AG04449 (cell line): ENCODE measurements at regions of chr1 and their contacts with region 1.

Region 1: DNA sequence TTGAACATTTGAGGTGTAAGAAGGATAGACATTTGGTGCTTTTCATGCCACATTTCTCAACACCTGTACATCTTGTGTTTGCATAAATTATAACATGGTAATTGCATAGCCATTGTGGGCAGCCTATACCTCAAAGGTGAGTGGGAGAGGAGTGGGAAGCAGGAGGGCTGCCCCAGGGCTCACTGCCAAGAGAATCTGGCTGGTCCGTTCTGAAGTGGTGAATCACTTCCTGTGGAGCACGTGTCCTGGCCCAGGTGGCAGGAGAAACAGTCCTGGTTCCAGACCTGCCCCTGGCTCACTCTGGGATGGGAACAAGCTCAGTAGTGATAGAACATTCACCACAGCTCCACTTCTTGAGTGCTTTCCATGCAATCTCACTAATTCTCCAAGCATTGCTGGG is 11.6 kb upstream of the OLFML2B start:
- DNase-seq: no peak
- H3K4me3 ChIP-seq: no peak overlapping the region
- CTCF ChIP-seq: no peak

Region 2: DNA sequence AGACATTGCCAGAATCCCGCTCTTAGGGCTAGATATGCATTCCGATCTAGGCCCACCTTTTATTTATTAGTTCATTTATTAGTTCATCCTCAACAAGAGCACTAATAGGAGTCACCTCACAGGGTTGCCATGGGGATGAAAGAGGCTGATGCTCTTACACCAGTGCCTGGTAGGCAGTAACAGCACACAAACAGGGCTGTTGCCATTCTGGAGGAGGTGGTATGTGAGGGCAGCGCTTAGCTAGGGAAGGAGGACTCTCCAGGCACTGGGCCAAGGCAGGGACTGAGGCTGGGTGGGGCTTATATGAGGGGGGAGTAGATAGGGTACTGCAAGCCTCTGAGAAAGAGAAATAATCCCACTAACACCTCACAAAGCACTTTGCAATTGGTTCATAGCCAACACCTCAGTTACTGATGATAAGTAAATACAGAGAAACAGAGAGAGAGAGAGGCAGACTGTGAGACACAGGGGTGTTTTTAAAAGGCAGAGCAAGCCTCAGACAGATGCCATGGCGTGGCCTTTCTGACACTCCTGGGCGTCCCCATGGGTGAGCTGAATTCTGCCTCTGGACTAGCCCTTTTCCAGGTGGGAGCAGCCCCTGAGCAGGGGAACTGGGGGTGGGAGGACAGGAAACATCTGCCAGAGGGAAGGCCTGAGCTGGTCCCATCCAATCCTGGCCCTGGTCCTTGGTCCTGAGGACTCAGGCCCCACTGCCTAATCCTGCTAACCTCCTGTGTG is 524.1 kb before region 1 on chr1:
- CTCF ChIA-PET with region 1: no interaction called
- POLR2A ChIA-PET with region 1: no interaction called
- DNase-seq: no peak
- H3K4me3 ChIP-seq: no peak overlapping the region
- CTCF ChIP-seq: no peak

Region 3: GRCh38 chr1:161738627-161739287 is 296.5 kb before region 1 on chr1:
- CTCF ChIA-PET with region 1: interaction called, 26 read pairs
- POLR2A ChIA-PET with region 1: no interaction called
- DNase-seq: peak; percentile 45
- H3K4me3 ChIP-seq: no peak overlapping the region
- CTCF ChIP-seq: peak; percentile 61

Region 4: DNA sequence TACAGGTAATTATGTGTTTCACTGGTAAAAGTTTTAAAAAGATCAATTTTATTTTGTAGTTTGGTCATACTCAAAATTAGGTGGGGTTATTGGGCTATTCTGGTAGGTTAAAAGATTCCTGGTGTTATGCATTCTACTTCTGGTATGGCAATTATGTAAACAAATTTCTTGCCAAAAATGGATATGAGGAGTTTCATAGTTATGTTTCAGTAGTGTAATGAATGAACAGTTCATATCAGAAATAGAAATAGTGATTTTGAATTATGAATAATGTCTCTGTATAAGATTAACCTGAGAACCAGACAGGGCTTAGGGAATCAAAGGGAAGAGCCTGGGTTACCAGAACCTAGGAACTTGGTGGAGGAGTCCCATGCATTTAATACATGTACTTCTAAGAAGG is 253.2 kb before region 1 on chr1:
- CTCF ChIA-PET with region 1: interaction called, 36 read pairs
- POLR2A ChIA-PET with region 1: no interaction called
- DNase-seq: peak; percentile 5
- H3K4me3 ChIP-seq: no peak overlapping the region
- CTCF ChIP-seq: no peak

Region 5: DNA sequence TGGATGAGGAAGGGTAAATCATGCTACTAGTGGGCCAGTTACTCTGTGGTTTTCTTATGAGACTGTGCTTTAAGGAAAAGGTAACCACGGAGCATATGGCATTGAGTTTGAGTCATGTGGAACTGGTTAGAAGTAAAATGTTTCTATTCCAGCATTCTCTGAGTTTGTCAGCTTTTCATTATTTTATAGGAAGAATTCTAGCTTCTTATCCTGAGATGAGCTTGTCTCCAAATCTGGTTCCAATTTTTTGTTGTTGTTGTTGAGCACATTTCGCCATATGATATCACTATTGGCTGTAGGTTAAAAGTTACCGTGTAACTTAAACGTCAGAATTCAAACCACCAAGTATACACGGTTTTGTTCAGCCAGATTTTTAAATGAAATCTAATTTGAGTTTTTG is 199.2 kb before region 1 on chr1:
- CTCF ChIA-PET with region 1: interaction called, 14 read pairs
- POLR2A ChIA-PET with region 1: no interaction called
- DNase-seq: peak; percentile 65
- H3K4me3 ChIP-seq: no peak overlapping the region
- CTCF ChIP-seq: no peak

Region 6: DNA sequence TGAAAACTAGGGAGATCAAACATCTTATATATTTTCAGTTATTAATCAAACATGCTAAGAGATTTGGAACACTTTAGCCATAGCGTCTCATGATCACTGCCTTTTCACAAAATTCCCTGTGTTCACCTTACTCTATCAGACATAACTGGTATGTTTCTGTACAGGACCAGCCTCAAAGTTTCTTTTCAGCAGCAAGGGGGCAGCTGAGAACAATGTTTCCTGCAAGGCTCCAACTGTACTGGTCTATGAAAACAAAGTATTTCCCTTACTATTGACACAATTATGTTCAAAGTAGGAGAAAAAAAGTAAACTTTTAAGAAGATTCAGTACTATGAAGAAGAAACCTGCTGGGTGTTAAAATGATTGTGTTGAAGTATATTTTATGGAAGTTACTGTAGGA is 170.7 kb before region 1 on chr1:
- CTCF ChIA-PET with region 1: interaction called, 92 read pairs
- POLR2A ChIA-PET with region 1: interaction called, 5 read pairs
- DNase-seq: no peak
- H3K4me3 ChIP-seq: no peak overlapping the region
- CTCF ChIP-seq: peak; percentile 54

Region 7: DNA sequence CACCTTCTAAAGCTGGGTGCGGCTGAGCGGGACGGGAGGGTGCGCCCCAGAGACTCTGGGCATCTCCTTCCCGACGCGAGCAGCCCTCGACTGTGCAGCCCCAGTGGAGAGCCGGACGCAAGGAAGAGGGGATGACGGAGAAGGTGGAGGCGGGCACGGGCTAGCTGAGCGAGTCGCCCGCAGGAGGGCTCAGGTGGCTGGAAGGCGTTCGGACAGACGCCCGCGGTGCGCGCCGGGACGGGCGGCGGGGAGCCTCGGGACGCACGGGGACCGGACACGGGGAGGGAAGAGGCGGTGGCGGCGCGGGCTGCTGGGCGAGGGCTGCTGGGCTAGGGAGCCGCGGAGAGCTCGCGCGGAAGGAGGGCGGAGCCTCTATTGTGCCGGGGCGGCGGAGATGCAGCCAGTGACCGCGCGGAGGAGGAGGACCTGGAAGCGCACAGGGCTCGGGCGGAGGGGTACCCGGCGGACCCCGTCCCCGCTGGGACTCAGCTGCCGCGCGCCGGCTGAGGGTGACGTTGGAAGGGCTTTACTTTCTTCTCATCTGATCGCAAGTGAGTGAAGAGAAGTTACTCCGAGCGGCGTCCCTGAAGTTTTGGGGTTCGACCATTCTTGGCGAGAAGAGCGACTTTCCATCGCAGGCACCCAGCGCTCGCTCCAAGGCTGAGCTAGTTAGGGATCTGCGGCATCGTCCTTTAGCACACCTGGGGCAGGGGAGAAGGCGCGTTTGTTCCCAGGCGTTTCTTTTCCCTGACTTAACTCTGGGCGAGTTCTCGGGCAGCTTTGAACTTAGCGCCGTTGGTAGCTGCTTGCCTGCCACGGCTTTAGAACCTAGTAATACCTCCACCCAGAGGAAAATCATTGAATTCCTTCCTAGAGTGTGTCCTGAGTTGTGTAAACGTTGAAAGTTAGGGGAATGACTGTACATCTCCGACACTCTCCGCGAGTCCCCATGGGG is 11.4 kb before region 1 on chr1 and contains the start of gene OLFML2B:
- CTCF ChIA-PET with region 1: interaction called, 89 read pairs
- POLR2A ChIA-PET with region 1: no interaction called
- DNase-seq: peak; percentile 46
- H3K4me3 ChIP-seq: peak within 1 kb of the TSS; percentile 77
- CTCF ChIP-seq: peak; percentile 39

Region 8: DNA sequence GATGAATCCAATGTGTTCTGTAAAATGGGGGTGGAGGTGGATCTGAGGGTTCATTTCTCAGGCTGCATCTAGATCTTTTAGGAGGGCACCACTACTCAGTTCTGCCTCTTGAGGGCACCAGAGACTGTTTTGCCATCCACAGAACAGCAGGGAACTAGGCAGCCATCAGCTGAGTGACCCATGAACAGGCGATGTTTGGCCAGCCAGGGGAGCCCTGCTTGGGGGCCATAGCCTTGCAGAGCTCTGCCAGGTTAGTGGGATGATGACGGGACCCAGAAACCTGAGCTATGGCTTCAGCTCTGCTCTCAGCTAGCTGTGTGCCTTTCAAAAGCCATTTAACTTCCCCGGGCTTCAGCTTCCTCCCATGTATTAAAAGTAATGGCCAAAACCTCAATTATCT is 20.8 kb after region 1 on chr1:
- CTCF ChIA-PET with region 1: interaction called, 20 read pairs
- POLR2A ChIA-PET with region 1: no interaction called
- DNase-seq: no peak
- H3K4me3 ChIP-seq: no peak overlapping the region
- CTCF ChIP-seq: peak; percentile 91

Region 9: DNA sequence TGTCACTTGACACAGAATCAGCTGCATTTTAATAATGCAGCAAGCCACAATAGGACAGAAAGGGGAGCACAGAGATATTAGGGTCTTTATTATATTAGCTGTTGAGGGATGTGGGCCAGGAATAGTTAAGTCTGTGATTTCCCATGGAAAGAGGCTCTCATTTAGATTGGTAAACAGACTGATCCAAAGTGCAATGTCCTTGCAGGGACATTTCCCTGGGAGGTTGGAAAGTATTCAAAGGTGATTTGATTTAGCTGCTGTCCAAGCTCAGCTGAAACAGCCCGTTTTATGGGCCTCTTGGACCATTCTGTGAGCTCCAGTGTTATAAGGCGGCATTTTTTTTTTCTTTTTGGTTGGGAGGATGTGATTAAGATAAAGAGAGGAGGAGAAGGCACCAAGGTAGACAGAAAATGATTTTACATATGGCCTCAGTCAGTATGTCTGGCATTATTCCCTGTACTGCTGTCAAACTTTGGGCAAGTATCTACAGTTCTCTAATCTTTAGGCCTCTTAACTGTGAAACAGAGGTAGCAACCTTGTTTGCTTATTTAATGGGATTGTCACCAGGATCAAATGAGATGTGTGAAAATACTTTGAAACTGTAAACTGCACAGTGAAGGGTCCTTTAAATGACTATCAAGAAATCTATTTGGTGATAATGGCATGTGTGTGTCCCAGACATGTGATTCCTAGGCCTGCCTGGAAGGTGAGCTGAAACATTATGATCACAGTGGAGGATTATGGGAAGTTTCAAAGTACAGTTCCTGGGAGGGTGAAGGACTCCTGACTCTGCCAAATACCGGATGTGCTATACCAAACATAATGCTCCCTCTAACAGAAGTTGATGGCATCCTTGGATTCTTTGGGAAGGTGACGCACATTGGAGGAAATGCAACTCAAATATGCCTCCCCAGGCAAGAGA is 96.4 kb after region 1 on chr1:
- CTCF ChIA-PET with region 1: no interaction called
- POLR2A ChIA-PET with region 1: no interaction called
- DNase-seq: no peak
- H3K4me3 ChIP-seq: no peak overlapping the region
- CTCF ChIP-seq: no peak

Region 10: GRCh38 chr1:162197615-162198421 is 162.6 kb after region 1 on chr1:
- CTCF ChIA-PET with region 1: no interaction called
- POLR2A ChIA-PET with region 1: no interaction called
- DNase-seq: no peak
- H3K4me3 ChIP-seq: no peak overlapping the region
- CTCF ChIP-seq: no peak